BJ (cell line): ENCODE measurements at regions of chr17 and their contacts with region 1.

Region 1: GRCh38 chr17:2386400-2387085 is 14.3 kb downstream of the MNT start:
- DNase-seq: no peak
- H3K4me3 ChIP-seq: no peak overlapping the region
- H3K27me3 ChIP-seq: no peaks in the 10 kb centered on the region
- CTCF ChIP-seq: no peak

Region 2: GRCh38 chr17:2336215-2336851 is 50.2 kb before region 1 on chr17 and contains the start of gene TSR1:
- CTCF ChIA-PET with region 1: interaction called, 10 read pairs
- POLR2A ChIA-PET with region 1: no interaction called
- DNase-seq: peak; percentile 41
- H3K4me3 ChIP-seq: peak within 1 kb of the TSS; percentile 69
- H3K27me3 ChIP-seq: no peaks in the 10 kb centered on the region
- CTCF ChIP-seq: peak; percentile 49
- polyA plus RNA-seq, gene TSR1: 8.9 and 13.2 TPM in 2 replicates

Region 3: GRCh38 chr17:2363851-2364762 is 22.4 kb before region 1 on chr17:
- CTCF ChIA-PET with region 1: interaction called, 22 read pairs
- POLR2A ChIA-PET with region 1: no interaction called
- DNase-seq: no peak
- H3K4me3 ChIP-seq: no peak overlapping the region
- H3K27me3 ChIP-seq: no peaks in the 10 kb centered on the region
- CTCF ChIP-seq: no peak

Region 4: DNA sequence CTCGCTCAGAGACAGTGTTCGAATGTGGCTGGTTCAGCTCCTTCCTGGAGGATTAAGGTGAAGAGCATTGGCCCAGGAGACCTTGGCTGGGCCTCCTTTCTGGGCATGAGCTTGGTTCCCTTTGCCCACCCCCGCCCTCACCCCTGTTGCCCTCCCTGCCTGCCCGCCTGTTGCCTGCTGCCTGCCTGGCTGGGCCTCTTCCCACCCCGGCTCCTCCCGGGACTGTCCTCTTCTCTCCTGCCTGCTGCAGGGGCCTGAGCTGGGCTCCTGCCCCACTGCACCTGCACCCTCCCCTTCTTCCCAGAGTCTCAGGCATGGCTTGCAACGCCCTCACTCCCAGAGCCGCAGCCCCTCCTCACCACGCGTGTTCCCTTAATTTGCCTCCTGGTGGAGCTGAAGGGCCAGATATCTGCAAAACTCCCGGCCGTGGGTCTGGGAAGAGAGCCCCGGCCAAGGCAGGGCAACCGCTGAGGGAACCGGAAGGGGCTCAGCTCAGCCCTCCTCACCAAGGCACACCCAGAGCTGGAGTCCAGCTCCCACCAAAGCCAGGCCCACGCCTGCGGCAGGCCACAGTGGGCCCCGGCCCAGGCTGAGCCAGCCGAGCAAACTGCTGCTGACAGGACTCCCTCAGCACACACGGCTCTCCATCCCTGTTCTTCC is 16.9 kb before region 1 on chr17:
- CTCF ChIA-PET with region 1: interaction called, 22 read pairs
- POLR2A ChIA-PET with region 1: no interaction called
- DNase-seq: no peak
- H3K4me3 ChIP-seq: no peak overlapping the region
- H3K27me3 ChIP-seq: no peaks in the 10 kb centered on the region
- CTCF ChIP-seq: peak; percentile 12; the same call in 1 of the 2 replicates

Region 5: GRCh38 chr17:2401426-2402221 is 15.1 kb after region 1 on chr17:
- CTCF ChIA-PET with region 1: interaction called, 77 read pairs
- POLR2A ChIA-PET with region 1: interaction called, 3 read pairs
- DNase-seq: peak; percentile 97
- H3K4me3 ChIP-seq: peak overlapping the region; percentile 51
- H3K27me3 ChIP-seq: no peaks in the 10 kb centered on the region
- CTCF ChIP-seq: no peak

Region 6: GRCh38 chr17:2435181-2435741 is 48.7 kb after region 1 on chr17:
- CTCF ChIA-PET with region 1: interaction called, 11 read pairs
- POLR2A ChIA-PET with region 1: no interaction called
- DNase-seq: no peak
- H3K4me3 ChIP-seq: no peak overlapping the region
- H3K27me3 ChIP-seq: no peaks in the 10 kb centered on the region
- CTCF ChIP-seq: no peak